ENCODE measurements at regions of chr15 and their contacts with region 1.

Region 1: GRCh38 chr15:78540141-78540928 is at the start of gene PSMA4:
- DNase-seq: peak; percentile 38 to 96
- H3K4me3 ChIP-seq: peak within 1 kb of the TSS; percentile 82 to 93 (median 92)
- H3K27ac ChIP-seq: peak within 1 kb of the TSS; percentile 92
- H3K4me1 ChIP-seq: peaks cover 0 to 3% (median 1%) of the 10 kb centered on the region in 4 experiments; a peak in 3 of 7 replicates
- H3K27me3 ChIP-seq: no peaks in the 10 kb centered on the region
- CTCF ChIP-seq: no peak
- EP300 ChIP-seq: no peak
- POLR2A ChIP-seq: peak; percentile 58 to 73
- RAD21 ChIP-seq: no peak
- total RNA-seq, gene PSMA4: 336 and 348 TPM in 2 replicates

Region 2: DNA sequence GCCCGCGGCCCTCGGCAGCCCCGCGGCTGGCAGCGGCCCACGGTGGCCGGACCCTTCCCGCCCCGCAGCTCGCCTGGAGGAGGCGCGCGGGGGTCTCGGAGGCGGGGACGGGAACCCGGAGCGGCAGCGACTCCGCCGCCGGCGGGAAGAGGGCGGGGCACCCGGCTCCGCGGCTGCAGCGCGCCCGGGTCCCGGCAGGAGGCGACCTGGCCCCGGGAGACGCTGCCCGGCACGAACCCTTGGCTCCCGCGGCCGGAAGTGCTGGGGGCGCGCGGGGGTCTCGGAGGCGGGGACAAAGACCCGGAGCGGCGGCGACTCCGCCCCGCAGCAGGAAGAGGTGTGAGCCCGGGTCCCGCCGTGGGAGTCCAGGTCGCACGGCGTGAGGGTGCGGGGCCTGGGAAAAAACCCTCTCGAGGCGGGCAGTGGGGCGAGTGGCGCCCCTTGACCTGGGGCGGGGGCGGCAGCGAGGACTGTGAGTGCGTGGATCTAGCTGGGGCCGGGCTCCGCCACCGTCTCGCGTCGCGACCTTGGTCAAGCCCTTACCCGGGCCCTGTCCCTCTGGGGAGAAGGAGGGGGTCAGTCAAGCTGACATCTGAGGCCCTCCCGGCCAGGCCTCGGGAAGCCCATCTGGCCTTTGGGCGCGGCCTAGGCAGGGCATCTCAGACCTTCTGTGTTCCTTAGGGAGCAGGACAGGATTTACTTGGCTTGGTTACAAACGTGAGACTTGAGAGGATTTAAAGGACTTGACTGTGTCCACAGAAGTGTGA is 408.9 kb before region 1 on chr15 and contains the start of gene CIB2:
- CTCF ChIA-PET with region 1: no interaction called
- POLR2A ChIA-PET with region 1: no interaction called
- DNase-seq: peak in 1 of 2 experiments; percentile 91
- H3K4me3 ChIP-seq: peak within 1 kb of the TSS; percentile 66 to 81 (median 80)
- H3K27ac ChIP-seq: no peak within 1 kb of the TSS
- H3K4me1 ChIP-seq: peaks cover 0 to 21% (median 14%) of the 10 kb centered on the region in 4 experiments; a peak in 6 of 7 replicates
- H3K27me3 ChIP-seq: no peaks in the 10 kb centered on the region; a peak in 1 of 7 replicates
- CTCF ChIP-seq: peak; percentile 48 to 82 (median 57)
- EP300 ChIP-seq: 0 out of 3 replicates have a peak, but pooled peaks of 1 of the 2 experiments have one; percentile 26
- POLR2A ChIP-seq: no peak; a peak in 1 of 3 replicates
- RAD21 ChIP-seq: peak; percentile 55 to 69
- total RNA-seq, gene CIB2: 45.8 and 46.8 TPM in 2 replicates

Region 3: GRCh38 chr15:78552597-78552996 is 12.3 kb after region 1 on chr15:
- CTCF ChIA-PET with region 1: interaction called, 6 read pairs
- POLR2A ChIA-PET with region 1: interaction called, 17 read pairs
- DNase-seq: no peak
- H3K4me3 ChIP-seq: no peak overlapping the region
- H3K27ac ChIP-seq: no peak overlapping the region
- H3K4me1 ChIP-seq: no peaks in the 10 kb centered on the region
- H3K27me3 ChIP-seq: no peaks in the 10 kb centered on the region
- CTCF ChIP-seq: no peak
- EP300 ChIP-seq: no peak
- POLR2A ChIP-seq: no peak
- RAD21 ChIP-seq: no peak

Region 4: GRCh38 chr15:78565097-78565951 is 25.0 kb after region 1 on chr15 and contains the start of gene CHRNA5:
- CTCF ChIA-PET with region 1: interaction called, 7 read pairs
- POLR2A ChIA-PET with region 1: interaction called, 17 read pairs
- DNase-seq: peak; percentile 95 to 100
- H3K4me3 ChIP-seq: peak within 1 kb of the TSS; percentile 80 to 89 (median 84)
- H3K27ac ChIP-seq: peak within 1 kb of the TSS; percentile 71; the same call in 1 of the 2 replicates
- H3K4me1 ChIP-seq: peaks cover 3 to 7% (median 4%) of the 10 kb centered on the region in 4 experiments; a peak in 6 of 7 replicates
- H3K27me3 ChIP-seq: no peaks in the 10 kb centered on the region
- CTCF ChIP-seq: 0 out of 4 replicates have a peak, but pooled peaks of 1 of the 3 experiments have one; percentile 3
- EP300 ChIP-seq: no peak
- POLR2A ChIP-seq: peak; percentile 92 to 95
- RAD21 ChIP-seq: no peak
- total RNA-seq, gene CHRNA5: 29.3 and 31.4 TPM in 2 replicates